Activated CD4-positive, alpha-beta T cell treated with anti-CD3 and anti-CD28 coated beads for 36 hours (primary cell): ENCODE measurements at regions of chr11 and their contacts with region 1.

Region 1: DNA sequence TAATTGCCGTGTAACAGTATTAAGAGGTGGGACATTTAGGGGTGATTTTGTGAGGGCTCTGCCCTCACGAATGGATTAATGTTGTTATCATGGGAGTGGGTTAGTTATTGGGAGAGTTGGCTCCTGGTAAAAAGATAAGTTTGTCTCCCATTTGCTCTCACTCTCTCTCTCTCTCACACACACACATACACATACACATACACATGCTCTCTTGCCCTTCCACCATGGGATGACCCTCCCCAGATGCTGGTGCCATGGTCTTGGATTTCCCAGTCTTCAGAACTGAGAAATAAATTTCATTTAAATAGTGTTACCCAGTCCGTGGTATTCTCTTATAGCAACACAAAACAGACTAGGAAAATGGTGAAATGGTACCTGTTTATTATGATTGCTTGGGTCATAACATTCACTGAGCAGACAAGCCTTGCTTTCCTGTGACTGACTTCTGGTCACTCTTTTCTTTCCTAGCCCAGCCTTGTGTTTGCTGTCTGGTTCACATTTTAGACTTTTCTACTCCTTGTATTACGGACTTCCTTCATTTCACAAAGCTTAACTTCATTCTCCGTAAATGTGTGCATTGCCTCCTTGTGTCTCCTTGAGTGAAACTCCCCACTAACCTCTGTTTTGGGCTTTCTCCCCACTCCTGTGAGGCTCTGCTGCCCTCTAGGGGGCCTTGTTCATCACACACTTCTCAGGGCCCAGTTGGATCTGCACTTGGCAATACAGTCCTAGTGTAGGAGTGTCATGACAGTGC is 206.5 kb upstream of the CTSC start:
- DNase-seq: peak; percentile 88
- ATAC-seq: peak; percentile 99
- H3K4me3 Mint-ChIP-seq: no peak overlapping the region
- H3K27ac Mint-ChIP-seq: no peak overlapping the region
- H3K4me1 Mint-ChIP-seq: peaks cover 12% of the 10 kb centered on the region
- H3K27me3 Mint-ChIP-seq: no peaks in the 10 kb centered on the region

Region 2: DNA sequence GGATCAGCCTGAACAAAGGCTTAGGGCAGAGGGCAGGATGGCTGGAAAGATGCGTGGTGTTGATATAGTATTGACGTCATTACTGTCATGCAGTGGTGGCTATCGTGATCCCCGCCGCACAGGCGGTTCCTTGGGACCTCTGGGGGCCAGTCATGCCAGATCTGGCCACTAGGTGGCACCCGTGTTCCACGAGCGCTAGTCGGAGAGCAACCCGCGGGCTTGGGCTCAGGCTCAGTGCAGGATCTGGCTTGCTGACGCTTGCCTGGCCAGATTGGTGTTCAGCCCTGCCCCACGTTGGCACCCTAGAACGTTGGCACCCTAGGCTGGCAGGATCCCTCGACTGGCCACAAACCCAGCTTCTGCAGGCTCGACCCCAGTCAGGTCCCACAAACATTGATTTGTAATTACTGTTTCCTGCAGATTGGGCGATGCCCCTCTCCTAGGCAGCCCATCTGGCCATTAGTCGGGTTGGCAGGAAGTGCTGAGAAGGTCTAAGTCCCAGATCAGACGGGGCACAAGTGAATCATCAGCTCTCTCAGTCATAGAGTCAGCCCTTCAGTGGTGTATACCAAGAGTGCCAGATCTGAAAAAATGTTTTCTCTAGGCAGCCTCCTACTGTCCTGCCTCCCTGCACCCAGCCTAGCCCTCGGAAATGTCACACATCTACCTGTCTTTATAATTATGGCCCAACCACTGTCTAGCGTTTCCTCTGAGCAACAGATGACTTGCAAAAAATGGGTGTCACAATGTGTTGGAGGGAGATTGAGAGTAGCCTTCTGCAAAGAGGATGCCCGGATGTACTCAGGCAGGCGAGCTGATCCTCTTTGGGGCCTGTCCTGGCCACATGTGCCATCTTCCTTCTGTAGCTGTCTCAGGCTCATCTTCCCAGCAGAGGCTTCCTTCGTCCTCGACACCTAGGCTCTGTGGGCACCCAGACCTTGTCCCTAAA is 1191.0 kb before region 1 on chr11:
- CTCF ChIA-PET with region 1: no interaction called
- POLR2A ChIA-PET with region 1: no interaction called
- intact Hi-C with region 1: loop called (anchors 1 to 5 kb)
- DNase-seq: peak; percentile 92
- ATAC-seq: peak; percentile 93
- H3K4me3 Mint-ChIP-seq: no peak overlapping the region
- H3K27ac Mint-ChIP-seq: no peak overlapping the region
- H3K4me1 Mint-ChIP-seq: peaks cover 7% of the 10 kb centered on the region
- H3K27me3 Mint-ChIP-seq: peaks cover 8% of the 10 kb centered on the region

Region 3: DNA sequence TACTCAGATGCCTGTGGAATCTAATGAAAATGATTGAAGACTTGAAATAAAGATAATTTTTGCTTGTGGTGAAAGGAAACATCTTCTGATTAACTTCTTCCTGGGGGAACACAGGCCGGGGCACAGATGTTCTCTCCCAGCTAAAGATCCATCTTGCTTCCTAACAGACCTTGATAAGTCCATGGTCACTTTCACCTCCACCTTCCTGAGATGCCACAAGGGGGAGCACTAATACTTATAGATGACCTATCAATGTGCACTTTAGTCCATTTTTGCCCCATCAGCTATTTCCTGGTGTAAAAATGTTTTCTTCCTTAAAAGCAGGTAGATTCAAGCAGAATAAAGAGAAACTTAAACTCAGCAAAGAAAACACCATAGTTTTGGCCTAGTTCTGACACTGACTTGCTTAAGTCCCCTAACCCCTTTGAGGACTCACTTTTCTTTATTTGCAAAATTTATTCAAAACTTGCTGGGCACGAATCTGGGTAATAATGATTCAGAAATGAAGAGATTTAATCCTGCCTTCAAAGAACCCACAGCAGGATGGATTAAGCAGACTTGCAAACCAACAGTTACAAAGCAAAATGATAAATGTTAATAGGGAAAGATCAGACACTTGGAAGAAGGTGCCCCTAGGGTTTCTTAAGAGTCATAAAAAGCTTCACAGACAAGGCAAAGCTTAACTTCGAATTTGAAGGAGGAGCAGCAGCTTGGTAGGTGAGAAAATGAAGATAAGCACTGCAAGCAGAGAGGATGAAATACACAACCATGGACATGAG is 527.5 kb before region 1 on chr11:
- CTCF ChIA-PET with region 1: interaction called, 57 read pairs
- POLR2A ChIA-PET with region 1: no interaction called
- intact Hi-C with region 1: loop called (anchors 1 kb)
- DNase-seq: peak; percentile 72
- ATAC-seq: peak; percentile 69
- H3K4me3 Mint-ChIP-seq: no peak overlapping the region
- H3K27ac Mint-ChIP-seq: no peak overlapping the region
- H3K4me1 Mint-ChIP-seq: no peaks in the 10 kb centered on the region
- H3K27me3 Mint-ChIP-seq: no peaks in the 10 kb centered on the region

Region 4: GRCh38 chr11:88231894-88232482 is 312.1 kb before region 1 on chr11:
- CTCF ChIA-PET with region 1: interaction called, 15 read pairs
- POLR2A ChIA-PET with region 1: no interaction called
- intact Hi-C with region 1: loop called (anchors 1 kb)
- DNase-seq: peak; percentile 32
- ATAC-seq: peak; percentile 80
- H3K4me3 Mint-ChIP-seq: no peak overlapping the region
- H3K27ac Mint-ChIP-seq: no peak overlapping the region
- H3K4me1 Mint-ChIP-seq: no peaks in the 10 kb centered on the region
- H3K27me3 Mint-ChIP-seq: no peaks in the 10 kb centered on the region

Region 5: DNA sequence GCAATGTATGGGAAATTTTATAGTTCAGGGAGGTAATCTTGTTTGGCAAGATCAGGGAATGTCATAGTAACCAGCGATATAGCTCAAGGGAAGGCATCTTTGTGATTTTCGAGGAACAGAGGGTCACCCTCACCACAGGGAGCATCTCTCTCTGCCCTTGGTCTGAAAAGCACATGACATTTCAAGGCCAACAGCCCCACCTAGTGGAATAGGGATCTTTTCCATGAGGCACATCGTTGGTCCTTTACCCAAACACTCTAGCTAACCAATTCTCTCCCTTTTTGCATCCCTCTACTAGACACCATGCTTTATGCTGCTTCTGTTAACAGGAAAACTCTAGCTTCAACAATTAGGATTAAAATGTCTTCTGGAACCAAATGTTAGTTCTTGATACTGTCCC is 342.7 kb after region 1 on chr11:
- CTCF ChIA-PET with region 1: no interaction called
- POLR2A ChIA-PET with region 1: no interaction called
- intact Hi-C with region 1: loop called in 1 of 2 experiments (anchors 5 kb)
- DNase-seq: peak; percentile 43
- ATAC-seq: no peak
- H3K4me3 Mint-ChIP-seq: no peak overlapping the region
- H3K27ac Mint-ChIP-seq: no peak overlapping the region
- H3K4me1 Mint-ChIP-seq: no peaks in the 10 kb centered on the region
- H3K27me3 Mint-ChIP-seq: no peaks in the 10 kb centered on the region